Panc1 (cell line): ENCODE measurements at regions of chrX and their contacts with region 1.

Region 1: DNA sequence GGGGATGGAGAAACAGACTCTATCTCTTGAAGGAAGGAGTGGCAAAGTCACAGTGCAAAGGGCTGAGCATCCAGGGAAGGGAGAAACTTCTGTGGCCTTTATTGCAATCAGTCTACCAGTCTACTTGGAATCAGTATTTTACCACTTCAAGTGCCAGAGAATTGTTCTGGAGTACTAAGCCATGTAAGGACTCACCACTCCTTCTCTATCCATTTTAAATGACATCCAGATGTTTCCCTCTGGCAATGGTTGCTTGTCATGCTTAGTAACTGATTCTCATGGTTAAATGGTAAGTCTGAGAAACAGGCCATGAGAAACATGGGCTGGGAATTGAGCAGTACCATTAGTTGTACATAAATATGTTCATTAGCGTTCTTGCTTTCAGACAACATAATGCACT is 21.1 kb upstream of the SMIM10 start:
- DNase-seq: no peak
- ATAC-seq: no peak
- H3K4me3 ChIP-seq: no peak overlapping the region
- H3K27ac ChIP-seq: no peak overlapping the region
- H3K4me1 ChIP-seq: peaks cover 6% of the 10 kb centered on the region
- H3K27me3 ChIP-seq: no peaks in the 10 kb centered on the region
- CTCF ChIP-seq: no peak

Region 2: DNA sequence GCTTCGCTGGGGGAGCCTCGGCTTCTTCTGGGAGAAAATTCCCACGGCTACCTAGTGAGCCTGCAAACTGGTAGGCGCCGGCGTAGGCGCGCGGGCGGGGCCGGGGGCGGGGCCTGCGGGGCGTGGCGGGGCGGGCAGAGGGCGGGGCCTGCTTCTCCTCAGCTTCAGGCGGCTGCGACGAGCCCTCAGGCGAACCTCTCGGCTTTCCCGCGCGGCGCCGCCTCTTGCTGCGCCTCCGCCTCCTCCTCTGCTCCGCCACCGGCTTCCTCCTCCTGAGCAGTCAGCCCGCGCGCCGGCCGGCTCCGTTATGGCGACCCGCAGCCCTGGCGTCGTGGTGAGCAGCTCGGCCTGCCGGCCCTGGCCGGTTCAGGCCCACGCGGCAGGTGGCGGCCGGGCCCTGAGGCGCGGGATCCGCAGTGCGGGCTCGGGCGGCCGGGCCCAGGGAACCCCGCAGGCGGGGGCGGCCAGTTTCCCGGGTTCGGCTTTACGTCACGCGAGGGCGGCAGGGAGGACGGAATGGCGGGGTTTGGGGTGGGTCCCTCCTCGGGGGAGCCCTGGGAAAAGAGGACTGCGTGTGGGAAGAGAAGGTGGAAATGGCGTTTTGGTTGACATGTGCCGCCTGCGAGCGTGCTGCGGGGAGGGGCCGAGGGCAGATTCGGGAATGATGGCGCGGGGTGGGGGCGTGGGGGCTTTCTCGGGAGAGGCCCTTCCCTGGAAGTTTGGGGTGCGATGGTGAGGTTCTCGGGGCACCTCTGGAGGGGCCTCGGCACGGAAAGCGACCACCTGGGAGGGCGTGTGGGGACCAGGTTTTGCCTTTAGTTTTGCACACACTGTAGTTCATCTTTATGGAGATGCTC is 509.5 kb before region 1 on chrX and contains the start of gene HPRT1:
- CTCF ChIA-PET with region 1: no interaction called
- POLR2A ChIA-PET with region 1: no interaction called
- in situ Hi-C with region 1: no loop called
- intact Hi-C with region 1: no loop called
- DNase-seq: no peak
- ATAC-seq: peak; percentile 93
- H3K4me3 ChIP-seq: peak within 1 kb of the TSS; percentile 78 to 80
- H3K27ac ChIP-seq: peak within 1 kb of the TSS; percentile 78
- H3K4me1 ChIP-seq: peaks cover 5% of the 10 kb centered on the region; the same call in 1 of the 2 replicates
- H3K27me3 ChIP-seq: no peaks in the 10 kb centered on the region
- CTCF ChIP-seq: no peak
- total RNA-seq, gene HPRT1: 77.1 TPM

Region 3: DNA sequence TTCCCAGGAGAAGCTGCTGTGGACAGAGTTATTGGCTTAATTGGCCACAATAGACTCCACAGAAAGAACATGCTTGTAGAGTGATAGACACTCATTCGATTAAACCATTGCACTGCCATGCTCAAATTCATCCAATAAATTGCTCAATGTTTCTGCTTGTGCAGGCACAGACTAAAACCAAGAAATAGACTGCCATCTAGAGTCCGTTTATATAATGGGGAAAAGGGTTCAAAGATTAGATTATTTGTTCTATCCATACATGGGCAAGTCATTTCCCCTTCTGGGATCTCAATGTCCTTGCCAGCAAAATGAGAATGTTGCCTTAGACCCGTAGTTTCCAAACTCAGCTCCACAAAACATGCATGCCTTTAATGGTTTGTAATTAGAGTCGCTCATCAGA is 29.7 kb after region 1 on chrX:
- CTCF ChIA-PET with region 1: no interaction called
- POLR2A ChIA-PET with region 1: no interaction called
- in situ Hi-C with region 1: no loop called
- intact Hi-C with region 1: loop called (anchors 1 kb)
- DNase-seq: peak; percentile 55
- ATAC-seq: no peak
- H3K4me3 ChIP-seq: no peak overlapping the region
- H3K27ac ChIP-seq: peak overlapping the region; percentile 76
- H3K4me1 ChIP-seq: peaks cover 37% of the 10 kb centered on the region
- H3K27me3 ChIP-seq: no peaks in the 10 kb centered on the region
- CTCF ChIP-seq: peak; percentile 67

Region 4: GRCh38 chrX:135086197-135086854 is 116.6 kb after region 1 on chrX:
- CTCF ChIA-PET with region 1: interaction called, 3 read pairs
- POLR2A ChIA-PET with region 1: no interaction called
- in situ Hi-C with region 1: no loop called
- intact Hi-C with region 1: loop called (anchors 10 kb)
- DNase-seq: peak; percentile 71
- ATAC-seq: peak; percentile 97
- H3K4me3 ChIP-seq: no peak overlapping the region
- H3K27ac ChIP-seq: no peak overlapping the region
- H3K4me1 ChIP-seq: no peaks in the 10 kb centered on the region
- H3K27me3 ChIP-seq: 0 out of 2 replicates have a peak, but pooled peaks cover 2% of the 10 kb centered on the region
- CTCF ChIP-seq: peak; percentile 83